ENCODE measurements at regions of chr18 and their contacts with region 1.

Region 1: GRCh38 chr18:35484034-35484433 is 13.7 kb downstream of the INO80C start:
- DNase-seq: no peak
- H3K4me3 Mint-ChIP-seq: no peak overlapping the region
- H3K27ac Mint-ChIP-seq: no peak overlapping the region
- H3K4me1 Mint-ChIP-seq: peaks cover 60% of the 10 kb centered on the region
- H3K27me3 Mint-ChIP-seq: no peaks in the 10 kb centered on the region

Region 2: GRCh38 chr18:35415511-35416073 is 68.4 kb before region 1 on chr18:
- CTCF ChIA-PET with region 1: no interaction called
- intact Hi-C with region 1: loop called (anchors 2 kb)
- DNase-seq: no peak
- H3K4me3 Mint-ChIP-seq: peak overlapping the region; percentile 48
- H3K27ac Mint-ChIP-seq: no peak overlapping the region
- H3K4me1 Mint-ChIP-seq: peaks cover 38% of the 10 kb centered on the region
- H3K27me3 Mint-ChIP-seq: no peaks in the 10 kb centered on the region

Region 3: GRCh38 chr18:35508746-35509338 is 24.8 kb after region 1 on chr18:
- CTCF ChIA-PET with region 1: no interaction called
- intact Hi-C with region 1: no loop called
- DNase-seq: no peak
- H3K4me3 Mint-ChIP-seq: no peak overlapping the region
- H3K27ac Mint-ChIP-seq: no peak overlapping the region
- H3K4me1 Mint-ChIP-seq: no peaks in the 10 kb centered on the region
- H3K27me3 Mint-ChIP-seq: no peaks in the 10 kb centered on the region